ENCODE measurements at regions of chr1 and their contacts with region 1.

Region 1: GRCh38 chr1:45490626-45491486 is at the start of gene TESK2:
- DNase-seq: peak; percentile 98
- H3K4me3 ChIP-seq: peak within 1 kb of the TSS; percentile 85
- H3K27ac ChIP-seq: peak within 1 kb of the TSS; percentile 47
- H3K27me3 ChIP-seq: no peaks in the 10 kb centered on the region
- CTCF ChIP-seq: no peak
- polyA plus RNA-seq, gene TESK2: 2.5 and 2.6 TPM in 2 replicates

Region 2: GRCh38 chr1:44786138-44786840 is 704.6 kb before region 1 on chr1:
- CTCF ChIA-PET with region 1: interaction called, 12 read pairs
- POLR2A ChIA-PET with region 1: no interaction called
- DNase-seq: no peak
- H3K4me3 ChIP-seq: peak overlapping the region; percentile 50
- H3K27ac ChIP-seq: no peak overlapping the region
- H3K27me3 ChIP-seq: peaks cover 2% of the 10 kb centered on the region
- CTCF ChIP-seq: peak; percentile 96

Region 3: DNA sequence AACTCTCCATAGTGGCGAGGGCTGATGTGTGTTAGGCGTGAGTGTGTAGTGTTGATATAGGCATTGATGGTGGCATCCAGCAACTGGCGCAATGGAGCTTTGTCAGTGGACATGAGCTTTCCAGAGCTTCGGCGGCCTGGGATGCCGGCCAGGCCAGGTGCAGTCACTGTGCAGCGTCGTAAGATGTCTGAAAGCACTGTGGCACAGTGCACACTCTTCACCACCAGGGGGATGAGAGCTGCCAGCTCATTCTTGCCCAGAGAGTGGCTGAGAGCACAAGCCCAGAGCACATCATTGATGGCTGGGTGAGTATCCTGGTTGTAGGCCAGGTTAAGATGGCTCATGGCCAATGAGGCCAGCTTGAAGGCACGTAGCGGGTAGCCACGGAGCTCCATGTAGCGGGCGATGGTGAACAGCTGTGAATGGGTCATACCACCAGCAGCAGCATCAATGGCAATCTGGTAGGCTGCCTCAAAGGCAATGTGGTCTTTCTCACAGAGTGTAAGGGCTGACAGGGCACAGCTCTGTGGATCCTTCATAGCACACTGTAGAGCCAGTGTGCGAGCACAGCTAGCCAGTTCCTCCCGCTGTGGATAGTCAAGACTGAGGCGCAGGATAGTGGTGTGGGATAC is 472.1 kb before region 1 on chr1:
- CTCF ChIA-PET with region 1: interaction called, 78 read pairs
- POLR2A ChIA-PET with region 1: no interaction called
- DNase-seq: peak; percentile 34
- H3K4me3 ChIP-seq: no peak overlapping the region
- H3K27ac ChIP-seq: no peak overlapping the region
- H3K27me3 ChIP-seq: no peaks in the 10 kb centered on the region
- CTCF ChIP-seq: peak; percentile 85

Region 4: DNA sequence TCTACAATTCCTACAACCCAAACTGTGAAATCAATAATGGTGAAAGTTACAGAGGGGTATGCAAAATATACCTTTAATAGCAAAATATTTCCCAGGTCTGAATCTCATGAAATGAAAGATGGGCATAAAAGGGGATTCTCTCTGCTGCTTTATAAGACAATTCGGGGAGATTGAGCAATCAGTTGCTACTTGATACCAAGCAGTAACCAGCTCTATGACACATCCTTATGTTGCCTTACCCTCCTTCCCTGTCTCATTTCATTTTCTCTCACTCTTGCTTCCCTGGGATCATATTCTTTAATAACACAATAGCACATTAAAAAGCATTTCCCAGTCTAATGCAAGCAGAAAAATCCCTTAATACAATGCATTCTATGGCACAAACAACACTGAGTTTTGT is 313.4 kb before region 1 on chr1:
- CTCF ChIA-PET with region 1: no interaction called
- POLR2A ChIA-PET with region 1: no interaction called
- DNase-seq: no peak
- H3K4me3 ChIP-seq: no peak overlapping the region
- H3K27ac ChIP-seq: no peak overlapping the region
- H3K27me3 ChIP-seq: peaks cover 2% of the 10 kb centered on the region
- CTCF ChIP-seq: no peak

Region 5: DNA sequence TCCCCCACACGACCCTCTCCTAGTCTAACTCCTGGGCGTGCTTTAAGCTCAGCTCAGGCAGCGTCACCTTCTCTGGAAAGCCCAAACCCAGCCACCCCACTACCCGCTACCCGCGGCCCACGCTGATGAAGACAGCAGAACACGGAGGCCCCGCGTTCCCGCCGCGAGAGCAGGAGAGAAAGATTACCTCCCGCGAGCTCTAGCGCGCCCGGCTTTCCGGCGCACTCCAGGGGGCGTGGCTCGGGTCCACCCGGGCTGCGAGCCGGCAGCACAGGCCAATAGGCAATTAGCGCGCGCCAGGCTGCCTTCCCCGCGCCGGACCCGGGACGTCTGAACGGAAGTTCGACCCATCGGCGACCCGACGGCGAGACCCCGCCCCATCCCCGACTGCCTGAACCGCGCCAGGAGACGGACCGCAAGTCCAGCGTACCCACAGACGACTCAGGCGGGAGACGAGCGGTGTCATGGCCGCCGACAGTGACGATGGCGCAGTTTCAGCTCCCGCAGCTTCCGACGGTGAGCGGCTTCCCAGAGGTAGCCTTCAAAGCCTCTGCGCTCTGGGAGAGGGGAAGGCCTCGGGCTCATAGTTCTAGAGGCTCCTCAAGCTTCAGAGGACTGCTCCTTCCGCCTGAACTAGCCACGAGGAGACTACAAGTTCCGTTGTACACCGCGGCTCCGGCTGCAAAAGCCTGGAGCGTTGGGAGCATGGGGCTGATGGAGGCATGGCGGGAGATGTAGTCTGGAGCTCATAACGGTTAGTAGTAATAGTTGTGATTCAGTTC is 150.9 kb before region 1 on chr1 and contains the starts of genes MUTYH and TOE1:
- CTCF ChIA-PET with region 1: interaction called, 26 read pairs
- POLR2A ChIA-PET with region 1: interaction called, 11 read pairs
- DNase-seq: peak; percentile 70
- H3K4me3 ChIP-seq: peak within 1 kb of the TSS; percentile 73
- H3K27ac ChIP-seq: peak within 1 kb of the TSS; percentile 94
- H3K27me3 ChIP-seq: no peaks in the 10 kb centered on the region
- CTCF ChIP-seq: peak; percentile 11; the same call in 1 of the 2 replicates
- polyA plus RNA-seq, gene MUTYH: 5.8 and 6.2 TPM in 2 replicates
- polyA plus RNA-seq, gene TOE1: 8.1 and 10.1 TPM in 2 replicates

Region 6: DNA sequence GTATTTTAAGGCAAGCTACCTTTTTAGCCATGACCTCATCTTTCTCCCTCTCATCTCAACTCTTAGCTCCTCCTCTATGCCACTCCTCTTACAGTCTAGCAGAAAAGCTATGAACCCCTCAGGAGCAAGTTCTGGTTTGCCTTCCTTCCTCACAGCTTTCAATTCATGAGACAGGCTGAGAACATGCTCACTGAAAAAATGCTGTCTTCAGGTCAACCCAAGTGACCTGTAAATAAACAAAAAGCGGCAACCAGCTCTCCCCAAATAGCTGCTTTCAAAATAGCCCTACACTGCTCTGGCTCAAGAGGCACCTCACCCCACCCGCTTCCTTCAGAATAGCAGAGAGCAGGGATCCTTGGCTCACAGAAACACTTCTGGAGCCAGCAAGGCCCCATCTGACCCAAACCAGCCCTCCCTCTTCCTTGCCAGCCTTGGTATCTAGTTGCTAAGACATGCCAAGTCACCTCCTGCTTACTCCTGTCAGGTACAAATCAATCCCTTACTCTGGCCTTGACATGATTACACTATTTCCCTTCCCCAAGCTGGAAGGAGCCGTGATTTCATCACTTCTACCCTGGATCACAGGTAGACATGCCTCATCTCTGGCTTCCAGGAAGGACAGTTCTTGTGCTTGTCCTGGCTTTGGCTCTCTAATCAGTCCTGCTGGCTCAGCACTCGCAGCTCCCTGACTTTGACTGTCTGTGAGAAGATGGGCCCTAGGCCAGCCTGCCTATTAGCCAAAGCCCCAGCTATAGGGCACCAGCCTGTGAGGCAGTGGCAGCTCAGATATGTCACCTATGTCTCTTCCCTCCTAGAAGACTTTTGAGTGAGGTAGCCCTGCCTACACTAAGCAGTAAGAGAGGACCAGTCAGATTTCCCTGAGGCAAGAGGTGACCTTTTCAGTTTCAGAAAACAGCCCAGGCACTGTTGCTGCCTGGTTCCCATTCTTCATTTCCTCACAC is 141.9 kb before region 1 on chr1:
- CTCF ChIA-PET with region 1: interaction called, 456 read pairs
- POLR2A ChIA-PET with region 1: no interaction called
- DNase-seq: no peak
- H3K4me3 ChIP-seq: no peak overlapping the region
- H3K27ac ChIP-seq: no peak overlapping the region
- H3K27me3 ChIP-seq: no peaks in the 10 kb centered on the region
- CTCF ChIP-seq: no peak

Measured in AG04450 (cell line).